Activated B cell treated with CpG ODN at 0.5 μM for 24 hours (primary cell): ENCODE measurements at regions of chr1 and their contacts with region 1.

Region 1: GRCh38 chr1:209692745-209693504 is 11.7 kb upstream of the HSD11B1 start:
- DNase-seq: peak; percentile 21
- ATAC-seq: peak; percentile 54
- H3K4me3 Mint-ChIP-seq: no peak overlapping the region
- H3K27ac Mint-ChIP-seq: no peak overlapping the region
- H3K4me1 Mint-ChIP-seq: peaks cover 4% of the 10 kb centered on the region
- H3K27me3 Mint-ChIP-seq: peaks cover 3% of the 10 kb centered on the region
- CTCF ChIP-seq: no peak

Region 2: DNA sequence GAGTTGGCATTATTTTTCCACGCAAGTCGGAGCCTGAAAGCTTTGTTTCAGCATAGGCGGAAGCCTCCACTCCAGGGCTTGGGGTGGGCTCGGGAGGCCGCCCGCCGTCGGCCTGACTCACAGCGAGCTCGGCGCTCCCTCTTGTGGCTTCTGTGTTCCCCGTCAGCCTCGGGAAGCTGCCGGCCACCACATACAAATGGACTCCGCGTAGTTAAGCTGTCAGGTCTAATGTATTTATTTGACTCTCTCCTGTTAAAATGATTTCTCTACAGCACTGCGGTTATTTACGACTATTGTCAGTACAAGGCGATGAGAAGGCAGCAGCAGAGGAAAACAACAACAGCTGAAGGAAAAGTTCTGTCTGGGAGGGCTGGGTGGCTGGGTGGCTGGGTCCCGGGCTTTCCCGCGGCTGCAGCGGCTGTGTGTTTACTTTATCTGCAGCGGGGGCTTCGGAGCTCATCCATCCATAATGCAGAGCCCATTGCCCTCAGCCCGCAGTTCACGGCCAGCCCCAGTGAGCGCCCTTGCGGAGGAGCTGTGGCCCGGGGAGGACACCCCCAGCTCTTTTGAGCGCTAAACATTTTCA is 485.1 kb before region 1 on chr1:
- CTCF ChIA-PET with region 1: no interaction called
- POLR2A ChIA-PET with region 1: no interaction called
- intact Hi-C with region 1: loop called (anchors 5 kb)
- DNase-seq: no peak
- ATAC-seq: no peak
- H3K4me3 Mint-ChIP-seq: no peak overlapping the region
- H3K27ac Mint-ChIP-seq: no peak overlapping the region
- H3K4me1 Mint-ChIP-seq: peaks cover 2% of the 10 kb centered on the region
- H3K27me3 Mint-ChIP-seq: peaks cover 24% of the 10 kb centered on the region
- CTCF ChIP-seq: no peak

Region 3: DNA sequence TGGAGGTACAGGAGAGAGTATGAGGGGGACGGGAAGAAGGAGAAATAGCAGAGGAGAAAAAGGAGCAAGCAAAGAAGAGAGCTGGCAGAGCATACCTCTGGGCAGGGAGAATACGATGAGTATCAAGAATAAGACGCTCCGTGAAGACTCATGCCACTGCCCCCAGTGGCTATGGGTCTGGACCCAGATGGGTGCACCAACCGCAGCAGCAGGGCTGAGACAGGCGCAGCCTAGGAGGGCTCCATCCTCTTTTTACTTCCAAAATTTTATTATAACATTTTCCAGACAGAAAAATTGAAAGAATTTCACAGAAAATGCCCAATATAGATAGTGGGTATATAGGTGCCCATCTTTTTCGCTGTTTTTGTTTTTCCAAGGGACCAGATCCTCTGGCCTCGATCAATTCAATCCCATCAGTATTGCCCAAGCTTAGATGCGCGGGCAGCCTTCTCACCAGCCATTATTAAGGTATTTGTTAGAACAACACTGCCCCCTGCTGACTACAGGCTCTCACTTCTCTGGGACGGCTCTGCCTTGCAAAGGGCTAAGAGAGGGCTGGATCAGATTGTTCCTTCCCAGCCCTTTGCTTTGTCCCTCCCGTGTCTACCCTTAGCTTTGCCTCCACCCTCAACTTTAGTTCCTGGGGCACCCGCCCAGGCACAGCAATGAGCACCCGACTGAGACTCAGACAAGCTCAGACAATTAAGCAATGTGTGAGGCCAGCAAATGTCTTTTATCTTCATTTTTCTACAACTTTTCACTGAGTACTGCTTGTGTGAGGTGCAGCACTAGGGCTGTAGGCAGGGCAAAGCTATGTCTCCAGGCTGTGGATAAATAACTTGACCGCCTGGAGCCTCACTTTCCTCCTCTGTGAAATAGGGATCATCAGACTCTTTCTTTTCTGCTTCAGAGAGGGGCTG is 126.9 kb before region 1 on chr1:
- CTCF ChIA-PET with region 1: interaction called, 61 read pairs
- POLR2A ChIA-PET with region 1: no interaction called
- intact Hi-C with region 1: loop called (anchors 1 kb)
- DNase-seq: peak; percentile 23
- ATAC-seq: peak; percentile 77
- H3K4me3 Mint-ChIP-seq: no peak overlapping the region
- H3K27ac Mint-ChIP-seq: no peak overlapping the region
- H3K4me1 Mint-ChIP-seq: peaks cover 6% of the 10 kb centered on the region
- H3K27me3 Mint-ChIP-seq: peaks cover 52% of the 10 kb centered on the region
- CTCF ChIP-seq: no peak

Region 4: GRCh38 chr1:209601809-209602657 is 90.9 kb before region 1 on chr1:
- CTCF ChIA-PET with region 1: interaction called, 4 read pairs
- POLR2A ChIA-PET with region 1: no interaction called
- intact Hi-C with region 1: loop called (anchors 1 kb)
- DNase-seq: no peak
- ATAC-seq: peak; percentile 69
- H3K4me3 Mint-ChIP-seq: no peak overlapping the region
- H3K27ac Mint-ChIP-seq: no peak overlapping the region
- H3K4me1 Mint-ChIP-seq: no peaks in the 10 kb centered on the region
- H3K27me3 Mint-ChIP-seq: peaks cover 16% of the 10 kb centered on the region
- CTCF ChIP-seq: no peak

Region 5: DNA sequence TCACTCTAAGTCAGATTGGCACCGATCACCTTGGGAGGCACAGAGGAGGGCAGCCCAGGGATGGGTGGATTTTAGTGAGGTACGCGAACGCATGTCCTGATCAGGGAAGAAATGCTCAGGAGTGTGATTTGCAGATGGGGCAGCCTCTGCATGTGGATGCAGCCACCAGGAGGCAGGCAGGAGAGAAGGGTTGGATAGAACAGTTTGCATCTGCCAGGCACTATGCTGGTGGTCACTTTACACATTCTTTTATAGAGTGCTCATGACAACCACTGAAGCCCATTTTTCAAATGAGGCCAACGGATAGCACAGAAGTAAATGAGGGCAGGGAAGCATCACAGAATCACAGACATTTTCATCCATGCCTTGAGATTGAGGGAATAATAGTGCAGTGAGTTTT is 46.4 kb before region 1 on chr1:
- CTCF ChIA-PET with region 1: no interaction called
- POLR2A ChIA-PET with region 1: no interaction called
- intact Hi-C with region 1: loop called (anchors 1 kb)
- DNase-seq: no peak
- ATAC-seq: no peak
- H3K4me3 Mint-ChIP-seq: no peak overlapping the region
- H3K27ac Mint-ChIP-seq: no peak overlapping the region
- H3K4me1 Mint-ChIP-seq: no peaks in the 10 kb centered on the region
- H3K27me3 Mint-ChIP-seq: no peaks in the 10 kb centered on the region
- CTCF ChIP-seq: no peak

Region 6: GRCh38 chr1:209875515-209875914 is 182.6 kb after region 1 on chr1:
- CTCF ChIA-PET with region 1: no interaction called
- POLR2A ChIA-PET with region 1: no interaction called
- intact Hi-C with region 1: no loop called
- DNase-seq: no peak
- ATAC-seq: no peak
- H3K4me3 Mint-ChIP-seq: no peak overlapping the region
- H3K27ac Mint-ChIP-seq: no peak overlapping the region
- H3K4me1 Mint-ChIP-seq: no peaks in the 10 kb centered on the region
- H3K27me3 Mint-ChIP-seq: peaks cover 20% of the 10 kb centered on the region
- CTCF ChIP-seq: no peak